ENCODE measurements at regions of chr5 and their contacts with region 1.

Region 1: GRCh38 chr5:154189819-154190594 is 526 bp upstream of the GALNT10 start:
- DNase-seq: peak; percentile 90
- CTCF ChIP-seq: peak; percentile 26

Region 2: DNA sequence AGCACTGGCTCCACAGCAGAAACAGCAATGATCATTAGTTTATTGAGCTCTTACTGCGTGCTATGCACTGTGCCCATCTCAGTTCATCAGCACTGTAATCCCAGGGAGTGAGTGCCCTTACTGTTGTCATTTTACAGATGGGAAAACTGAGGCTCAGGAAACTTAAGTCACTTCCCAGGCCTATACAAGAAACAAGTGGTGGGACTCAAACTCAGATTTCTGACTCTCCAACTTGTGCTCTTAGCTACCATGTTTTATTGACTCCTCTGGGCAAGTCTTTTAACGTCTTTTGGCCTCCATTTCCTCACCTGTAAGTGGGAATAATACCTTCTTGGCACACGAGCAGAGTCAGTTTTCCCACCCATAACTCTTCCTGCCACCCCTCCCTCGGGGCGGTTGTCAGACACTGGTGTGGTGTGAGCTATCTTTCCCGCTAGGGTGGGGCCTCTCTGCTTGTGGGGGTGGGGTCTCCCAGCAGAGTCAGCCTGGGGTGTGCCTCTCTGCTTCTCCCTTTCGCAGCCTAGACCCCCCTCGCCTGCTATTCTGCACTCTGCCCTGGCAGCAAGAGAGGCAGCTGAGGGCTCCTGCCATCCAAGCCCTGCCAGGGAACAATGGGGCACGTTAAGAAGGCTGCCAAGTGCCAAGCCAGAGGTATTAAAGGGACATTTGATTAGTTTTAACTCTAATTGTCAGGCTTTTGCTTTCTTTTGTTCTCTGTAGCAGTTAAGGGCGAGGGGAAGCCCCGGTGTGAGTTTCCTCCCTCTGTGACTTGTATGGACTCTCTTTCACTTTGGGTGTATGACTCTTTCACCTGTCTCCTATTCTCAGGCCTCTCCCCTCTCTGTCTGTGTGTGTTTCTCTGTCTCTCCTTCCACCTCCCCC is 12.6 kb after region 1 on chr5:
- CTCF ChIA-PET with region 1: interaction called, 18 read pairs
- POLR2A ChIA-PET with region 1: interaction called, 16 read pairs
- DNase-seq: peak; percentile 77
- CTCF ChIP-seq: no peak

Region 3: GRCh38 chr5:154238776-154239481 is 48.9 kb after region 1 on chr5:
- CTCF ChIA-PET with region 1: interaction called, 14 read pairs
- POLR2A ChIA-PET with region 1: interaction called, 3 read pairs
- DNase-seq: peak; percentile 49
- CTCF ChIP-seq: no peak

Region 4: DNA sequence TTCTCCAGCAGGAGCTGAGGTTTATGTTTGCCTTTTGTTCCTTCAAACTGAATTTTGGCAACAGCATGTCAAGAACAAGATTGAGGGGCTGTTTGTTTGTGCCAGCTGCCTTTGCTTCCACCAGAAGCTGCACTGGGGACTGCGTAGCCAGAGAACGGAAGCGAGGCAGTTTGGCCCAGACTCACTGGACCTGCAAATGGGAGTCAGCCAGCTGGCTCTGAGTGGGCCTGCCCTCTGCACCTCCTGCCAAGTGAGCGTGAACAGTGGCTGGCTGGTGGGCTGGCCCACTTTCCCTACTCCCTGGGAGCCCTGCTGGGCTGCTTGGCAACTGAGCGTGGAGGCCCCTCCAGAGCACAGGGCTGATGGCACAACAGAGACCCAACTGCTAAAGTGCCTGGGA is 112.2 kb after region 1 on chr5:
- CTCF ChIA-PET with region 1: interaction called, 13 read pairs
- POLR2A ChIA-PET with region 1: interaction called, 8 read pairs
- DNase-seq: no peak
- CTCF ChIP-seq: no peak

Region 5: GRCh38 chr5:154384480-154385235 is 194.7 kb after region 1 on chr5:
- CTCF ChIA-PET with region 1: interaction called, 10 read pairs
- POLR2A ChIA-PET with region 1: no interaction called
- DNase-seq: peak; percentile 84
- CTCF ChIP-seq: no peak

Measured in GM10248 (cell line).